HCT116 (cell line): ENCODE measurements at regions of chr7 and their contacts with region 1.

Region 1: GRCh38 chr7:104156842-104157277 is 51.0 kb downstream of the ORC5 start:
- DNase-seq: peak; percentile 23
- ATAC-seq: no peak
- H3K4me3 ChIP-seq: no peak overlapping the region
- H3K27ac ChIP-seq: no peak overlapping the region
- H3K4me1 ChIP-seq: no peaks in the 10 kb centered on the region
- H3K27me3 ChIP-seq: no peaks in the 10 kb centered on the region
- CTCF ChIP-seq: peak; percentile 41 to 78 (median 62); a peak in 5 of 6 replicates
- POLR2A ChIP-seq: no peak
- RAD21 ChIP-seq: peak; percentile 63

Region 2: GRCh38 chr7:103296901-103297836 is 859.7 kb before region 1 on chr7 and contains the start of gene PMPCB:
- CTCF ChIA-PET with region 1: no interaction called
- POLR2A ChIA-PET with region 1: no interaction called
- RAD21 ChIA-PET with region 1: no interaction called
- intact Hi-C with region 1: loop called (anchors 10 kb)
- DNase-seq: peak; percentile 84
- ATAC-seq: peak; percentile 91
- H3K4me3 ChIP-seq: peak within 1 kb of the TSS; percentile 71 to 85
- H3K27ac ChIP-seq: peak within 1 kb of the TSS; percentile 58
- H3K4me1 ChIP-seq: peaks cover 6 to 14% of the 10 kb centered on the region in 2 experiments; a peak in 3 of 4 replicates
- H3K27me3 ChIP-seq: no peaks in the 10 kb centered on the region
- CTCF ChIP-seq: peak; percentile 74 to 92 (median 88)
- POLR2A ChIP-seq: no peak
- RAD21 ChIP-seq: peak; percentile 86
- total RNA-seq, gene PMPCB: 73.9 TPM

Region 3: GRCh38 chr7:103447073-103447951 is 709.5 kb before region 1 on chr7:
- CTCF ChIA-PET with region 1: no interaction called
- POLR2A ChIA-PET with region 1: no interaction called
- RAD21 ChIA-PET with region 1: no interaction called
- intact Hi-C with region 1: loop called (anchors 2 kb)
- DNase-seq: peak; percentile 37
- ATAC-seq: peak; percentile 79
- H3K4me3 ChIP-seq: no peak overlapping the region
- H3K27ac ChIP-seq: no peak overlapping the region
- H3K4me1 ChIP-seq: peaks cover 0 to 14% of the 10 kb centered on the region in 2 experiments; a peak in 3 of 4 replicates
- H3K27me3 ChIP-seq: peaks cover 35% of the 10 kb centered on the region
- CTCF ChIP-seq: peak; percentile 41 to 87 (median 80)
- POLR2A ChIP-seq: no peak
- RAD21 ChIP-seq: peak; percentile 82

Region 4: GRCh38 chr7:103524042-103524907 is 632.6 kb before region 1 on chr7:
- CTCF ChIA-PET with region 1: no interaction called
- POLR2A ChIA-PET with region 1: no interaction called
- RAD21 ChIA-PET with region 1: no interaction called
- intact Hi-C with region 1: loop called (anchors 5 kb)
- DNase-seq: peak; percentile 12
- ATAC-seq: peak; percentile 62
- H3K4me3 ChIP-seq: no peak overlapping the region
- H3K27ac ChIP-seq: no peak overlapping the region
- H3K4me1 ChIP-seq: no peaks in the 10 kb centered on the region
- H3K27me3 ChIP-seq: peaks cover 57% of the 10 kb centered on the region
- CTCF ChIP-seq: peak; percentile 19 to 44 (median 25); a peak in 3 of 6 replicates
- POLR2A ChIP-seq: no peak
- RAD21 ChIP-seq: peak; percentile 64

Region 5: DNA sequence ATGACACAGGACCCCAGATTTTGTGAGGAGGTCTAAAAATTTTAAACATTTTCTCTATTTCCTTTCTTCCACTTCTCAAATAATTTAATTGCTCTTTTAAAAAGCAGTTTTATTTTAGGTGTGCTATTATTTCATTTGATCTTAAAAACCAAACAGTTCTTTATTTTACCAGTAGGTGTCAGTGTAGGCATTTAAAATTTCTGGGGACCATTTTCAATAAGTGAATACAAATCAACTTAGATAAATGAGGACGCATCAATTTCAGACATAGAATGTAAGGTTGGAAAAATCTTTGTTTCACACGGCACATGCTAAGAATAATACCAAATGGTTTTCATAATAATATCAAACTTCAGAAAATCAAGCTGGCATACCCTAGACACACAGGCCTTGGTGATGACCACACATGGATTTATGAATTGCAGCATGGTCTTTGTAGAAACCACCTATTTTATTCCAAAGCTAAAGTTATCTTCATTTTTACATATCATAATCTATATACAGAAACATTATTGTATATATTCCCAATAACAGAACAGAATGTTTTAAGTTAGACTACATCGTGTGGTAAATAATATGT is 583.3 kb before region 1 on chr7:
- CTCF ChIA-PET with region 1: no interaction called
- POLR2A ChIA-PET with region 1: no interaction called
- RAD21 ChIA-PET with region 1: no interaction called
- intact Hi-C with region 1: loop called (anchors 2 kb)
- DNase-seq: peak; percentile 18
- ATAC-seq: no peak
- H3K4me3 ChIP-seq: no peak overlapping the region
- H3K27ac ChIP-seq: no peak overlapping the region
- H3K4me1 ChIP-seq: no peaks in the 10 kb centered on the region
- H3K27me3 ChIP-seq: peaks cover 59% of the 10 kb centered on the region
- CTCF ChIP-seq: peak; percentile 30 to 71 (median 46); a peak in 4 of 6 replicates
- POLR2A ChIP-seq: no peak
- RAD21 ChIP-seq: peak; percentile 61

Region 6: GRCh38 chr7:104142147-104142546 is 14.7 kb before region 1 on chr7:
- CTCF ChIA-PET with region 1: no interaction called
- POLR2A ChIA-PET with region 1: no interaction called
- RAD21 ChIA-PET with region 1: no interaction called
- intact Hi-C with region 1: no loop called
- DNase-seq: no peak
- ATAC-seq: no peak
- H3K4me3 ChIP-seq: no peak overlapping the region
- H3K27ac ChIP-seq: no peak overlapping the region
- H3K4me1 ChIP-seq: no peaks in the 10 kb centered on the region
- H3K27me3 ChIP-seq: no peaks in the 10 kb centered on the region
- CTCF ChIP-seq: no peak
- POLR2A ChIP-seq: no peak
- RAD21 ChIP-seq: no peak